ENCODE measurements at regions of chr21 and their contacts with region 1.

Region 1: GRCh38 chr21:22791986-22792560 is 1793.9 kb downstream of the NCAM2 start:
- DNase-seq: peak; percentile 88
- H3K4me3 ChIP-seq: no peak overlapping the region
- H3K27ac ChIP-seq: no peak overlapping the region
- H3K4me1 ChIP-seq: peaks cover 12% of the 10 kb centered on the region
- H3K27me3 ChIP-seq: no peaks in the 10 kb centered on the region
- CTCF ChIP-seq: peak; percentile 79

Region 2: GRCh38 chr21:20999659-21000058 is 1792.4 kb before region 1 on chr21:
- CTCF ChIA-PET with region 1: no interaction called
- POLR2A ChIA-PET with region 1: no interaction called
- intact Hi-C with region 1: loop called (anchors 2 kb)
- DNase-seq: peak; percentile 82
- H3K4me3 ChIP-seq: peak overlapping the region; percentile 84
- H3K27ac ChIP-seq: no peak overlapping the region
- H3K4me1 ChIP-seq: peaks cover 18% of the 10 kb centered on the region
- H3K27me3 ChIP-seq: no peaks in the 10 kb centered on the region
- CTCF ChIP-seq: peak; percentile 89

Region 3: GRCh38 chr21:22235866-22236590 is 556.0 kb before region 1 on chr21:
- CTCF ChIA-PET with region 1: interaction called, 6 read pairs
- POLR2A ChIA-PET with region 1: no interaction called
- intact Hi-C with region 1: loop called (anchors 2 kb)
- DNase-seq: no peak
- H3K4me3 ChIP-seq: no peak overlapping the region
- H3K27ac ChIP-seq: no peak overlapping the region
- H3K4me1 ChIP-seq: peaks cover 13% of the 10 kb centered on the region
- H3K27me3 ChIP-seq: no peaks in the 10 kb centered on the region
- CTCF ChIP-seq: no peak

Region 4: DNA sequence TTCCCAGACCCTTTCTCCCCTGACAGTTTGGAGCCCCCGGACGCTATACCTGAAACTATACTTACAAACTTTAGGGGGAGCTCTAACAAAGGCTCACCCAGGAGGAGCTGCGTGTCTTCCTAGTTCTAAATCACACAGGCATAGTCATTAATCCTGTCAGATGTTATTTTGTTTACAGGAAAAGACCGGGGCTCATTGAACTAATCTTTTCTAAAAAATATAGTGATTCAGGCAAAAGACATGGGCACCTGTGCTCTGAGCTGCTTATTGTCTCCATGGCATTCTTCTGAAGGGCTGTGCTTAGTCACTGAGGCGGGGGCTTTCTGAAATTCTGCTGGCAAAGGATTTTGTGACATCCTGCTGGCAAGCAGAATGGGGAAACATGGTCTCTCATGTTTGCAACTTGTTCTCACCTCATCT is 216.9 kb before region 1 on chr21:
- CTCF ChIA-PET with region 1: no interaction called
- POLR2A ChIA-PET with region 1: no interaction called
- intact Hi-C with region 1: loop called (anchors 1 kb)
- DNase-seq: peak; percentile 84
- H3K4me3 ChIP-seq: peak overlapping the region; percentile 30
- H3K27ac ChIP-seq: peak overlapping the region; percentile 53
- H3K4me1 ChIP-seq: peaks cover 12% of the 10 kb centered on the region
- H3K27me3 ChIP-seq: no peaks in the 10 kb centered on the region
- CTCF ChIP-seq: peak; percentile 79

Region 5: DNA sequence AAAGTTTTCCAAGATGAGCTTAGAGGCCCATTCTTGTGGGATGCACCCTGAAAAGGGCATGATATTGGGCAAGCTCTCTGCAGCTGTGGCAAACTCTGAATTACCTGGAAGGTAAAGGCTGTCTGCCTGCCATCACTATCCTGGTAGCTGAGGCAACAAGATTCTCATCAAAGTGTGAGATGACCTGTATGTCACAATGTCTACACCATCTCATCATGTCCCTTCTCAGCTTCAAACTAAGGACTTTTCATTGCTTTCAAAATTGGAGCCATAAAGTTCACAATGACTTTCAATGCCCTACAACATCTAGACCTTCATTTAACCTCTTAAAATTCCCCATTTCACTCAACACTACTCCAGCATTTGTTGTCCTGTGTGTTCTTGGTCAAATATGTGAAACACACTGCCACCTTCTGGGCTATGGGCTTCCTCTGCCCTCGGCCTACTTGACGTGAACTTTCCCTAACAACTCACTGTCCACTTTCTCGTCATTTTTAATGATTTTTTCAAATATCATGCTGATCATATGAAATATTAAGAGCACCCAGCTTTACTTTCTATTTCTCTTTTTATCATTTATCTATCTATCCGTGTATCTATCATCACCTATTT is 224.4 kb after region 1 on chr21:
- CTCF ChIA-PET with region 1: no interaction called
- POLR2A ChIA-PET with region 1: no interaction called
- intact Hi-C with region 1: no loop called
- DNase-seq: peak; percentile 52
- H3K4me3 ChIP-seq: no peak overlapping the region
- H3K27ac ChIP-seq: no peak overlapping the region
- H3K4me1 ChIP-seq: no peaks in the 10 kb centered on the region
- H3K27me3 ChIP-seq: no peaks in the 10 kb centered on the region
- CTCF ChIP-seq: peak; percentile 64

Region 6: DNA sequence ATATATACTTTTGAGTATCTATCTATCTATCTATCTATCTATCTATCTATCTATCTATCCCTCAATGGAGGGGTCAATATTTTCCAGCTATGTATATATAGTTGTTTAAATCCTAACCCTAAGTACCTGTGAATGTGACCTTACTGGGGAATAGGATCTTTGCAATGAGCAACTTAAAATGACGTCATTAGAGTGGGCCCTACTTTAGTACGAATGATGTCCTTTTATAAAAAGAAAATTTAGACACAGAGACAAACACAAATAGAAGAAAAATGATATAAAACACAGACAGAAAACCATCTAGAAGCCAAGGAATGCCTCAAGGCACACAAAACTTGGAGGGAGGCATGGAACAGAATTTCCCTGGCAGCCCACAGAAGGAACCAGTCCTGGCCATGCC is 489.8 kb after region 1 on chr21:
- CTCF ChIA-PET with region 1: no interaction called
- POLR2A ChIA-PET with region 1: no interaction called
- intact Hi-C with region 1: no loop called
- DNase-seq: no peak
- H3K4me3 ChIP-seq: no peak overlapping the region
- H3K27ac ChIP-seq: no peak overlapping the region
- H3K4me1 ChIP-seq: no peaks in the 10 kb centered on the region
- H3K27me3 ChIP-seq: no peaks in the 10 kb centered on the region
- CTCF ChIP-seq: no peak

Region 7: GRCh38 chr21:23624281-23624680 is 832.2 kb after region 1 on chr21:
- CTCF ChIA-PET with region 1: no interaction called
- POLR2A ChIA-PET with region 1: no interaction called
- intact Hi-C with region 1: no loop called
- DNase-seq: no peak
- H3K4me3 ChIP-seq: no peak overlapping the region
- H3K27ac ChIP-seq: no peak overlapping the region
- H3K4me1 ChIP-seq: no peaks in the 10 kb centered on the region
- H3K27me3 ChIP-seq: no peaks in the 10 kb centered on the region
- CTCF ChIP-seq: no peak

Region 8: GRCh38 chr21:23968722-23969647 is 1176.9 kb after region 1 on chr21:
- CTCF ChIA-PET with region 1: no interaction called
- POLR2A ChIA-PET with region 1: no interaction called
- intact Hi-C with region 1: loop called (anchors 10 kb)
- DNase-seq: peak; percentile 58
- H3K4me3 ChIP-seq: no peak overlapping the region
- H3K27ac ChIP-seq: no peak overlapping the region
- H3K4me1 ChIP-seq: no peaks in the 10 kb centered on the region
- H3K27me3 ChIP-seq: no peaks in the 10 kb centered on the region
- CTCF ChIP-seq: peak; percentile 67